Colonic mucosa (tissue), 4 donors: ENCODE measurements at regions of chr2 and their contacts with region 1.

Region 1: GRCh38 chr2:210002158-210003157 is at the start of gene RPE:
- DNase-seq: peak; percentile 98
- H3K4me3 ChIP-seq: peak within 1 kb of the TSS; percentile 74
- H3K27ac ChIP-seq: peak within 1 kb of the TSS; percentile 48
- H3K4me1 ChIP-seq: no peaks in the 10 kb centered on the region
- H3K27me3 ChIP-seq: no peaks in the 10 kb centered on the region
- CTCF ChIP-seq: no peak
- total RNA-seq, gene RPE: 47.5 to 71.6 TPM

Region 2: DNA sequence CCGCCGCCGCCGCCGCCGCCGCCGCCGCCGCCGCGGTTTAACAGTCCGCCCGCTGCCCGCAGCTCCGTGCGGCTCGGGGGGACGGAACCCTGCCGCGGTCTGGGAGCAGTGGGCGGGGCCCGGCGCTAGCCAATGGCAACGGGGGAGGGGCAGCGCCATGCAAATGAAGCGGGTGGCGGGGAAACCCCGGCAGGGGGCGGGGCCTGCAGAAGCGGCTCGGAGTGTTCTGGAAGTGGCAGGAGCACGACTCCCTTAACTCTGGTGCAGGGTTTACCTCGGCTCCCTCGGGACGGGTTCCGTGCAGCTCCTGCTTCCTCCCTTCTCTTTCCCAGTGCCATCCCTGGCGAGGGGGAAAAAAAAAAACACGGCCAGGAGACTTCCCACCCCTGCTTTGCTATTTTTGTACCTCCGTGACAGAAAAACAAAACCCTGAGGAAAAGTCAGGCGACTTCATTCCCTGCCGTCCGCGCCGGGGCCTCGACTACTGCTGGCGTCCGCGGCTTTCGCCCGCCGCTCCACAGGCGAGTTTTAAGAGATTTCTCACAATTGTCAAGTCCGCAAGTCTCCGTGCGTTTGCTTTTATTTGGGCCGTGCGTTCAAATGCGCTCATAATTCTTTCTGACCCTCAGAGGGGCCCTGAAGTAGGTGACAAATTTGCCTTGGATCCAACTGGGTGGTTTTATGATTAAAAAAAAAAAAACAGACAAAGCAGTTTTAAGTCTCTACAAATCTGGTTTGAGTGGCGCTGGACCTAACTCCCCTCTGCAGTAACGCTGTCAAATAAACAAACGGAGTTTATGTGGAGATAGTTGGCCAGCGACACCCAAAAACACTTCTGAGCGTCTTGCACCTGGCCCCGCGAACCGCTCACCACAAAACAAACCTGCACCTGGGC is 169.1 kb after region 1 on chr2 and contains the start of gene KANSL1L:
- intact Hi-C with region 1: loop called (anchors 10 kb)
- DNase-seq: peak; percentile 99
- H3K4me3 ChIP-seq: peak within 1 kb of the TSS; percentile 79
- H3K27ac ChIP-seq: peak within 1 kb of the TSS; percentile 99
- H3K4me1 ChIP-seq: peaks cover 5% of the 10 kb centered on the region
- H3K27me3 ChIP-seq: no peaks in the 10 kb centered on the region
- CTCF ChIP-seq: no peak
- total RNA-seq, gene KANSL1L: 5.9 to 7.7 TPM